Activated naive CD4-positive, alpha-beta T cell treated with anti-CD3 and anti-CD28 coated beads for 36 hours (primary cell): ENCODE measurements at regions of chr13 and their contacts with region 1.

Region 1: GRCh38 chr13:33017323-33017929 is 1.2 kb downstream of the KL start:
- DNase-seq: peak; percentile 79
- H3K4me3 Mint-ChIP-seq: peak overlapping the region; percentile 64
- H3K27ac Mint-ChIP-seq: peak overlapping the region; percentile 7
- H3K4me1 Mint-ChIP-seq: peaks cover 9% of the 10 kb centered on the region
- H3K27me3 Mint-ChIP-seq: peaks cover 59% of the 10 kb centered on the region

Region 2: GRCh38 chr13:32443111-32443510 is 574.3 kb before region 1 on chr13:
- CTCF ChIA-PET with region 1: no interaction called
- intact Hi-C with region 1: loop called (anchors 10 kb)
- DNase-seq: peak; percentile 61
- H3K4me3 Mint-ChIP-seq: no peak overlapping the region
- H3K27ac Mint-ChIP-seq: no peak overlapping the region
- H3K4me1 Mint-ChIP-seq: peaks cover 14% of the 10 kb centered on the region
- H3K27me3 Mint-ChIP-seq: no peaks in the 10 kb centered on the region

Region 3: GRCh38 chr13:32586080-32586900 is 431.1 kb before region 1 on chr13 and contains the start of gene PDS5B:
- CTCF ChIA-PET with region 1: interaction called, 3 read pairs
- intact Hi-C with region 1: loop called (anchors 1 kb)
- DNase-seq: peak; percentile 95
- H3K4me3 Mint-ChIP-seq: peak within 1 kb of the TSS; percentile 95
- H3K27ac Mint-ChIP-seq: peak within 1 kb of the TSS; percentile 91
- H3K4me1 Mint-ChIP-seq: peaks cover 36% of the 10 kb centered on the region
- H3K27me3 Mint-ChIP-seq: no peaks in the 10 kb centered on the region
- total RNA-seq, gene PDS5B: 48.0 to 51.6 TPM

Region 4: GRCh38 chr13:32669030-32669646 is 348.3 kb before region 1 on chr13:
- CTCF ChIA-PET with region 1: no interaction called
- intact Hi-C with region 1: loop called (anchors 5 kb)
- DNase-seq: peak; percentile 10
- H3K4me3 Mint-ChIP-seq: no peak overlapping the region
- H3K27ac Mint-ChIP-seq: no peak overlapping the region
- H3K4me1 Mint-ChIP-seq: peaks cover 6% of the 10 kb centered on the region
- H3K27me3 Mint-ChIP-seq: no peaks in the 10 kb centered on the region

Region 5: GRCh38 chr13:32791545-32792172 is 225.8 kb before region 1 on chr13:
- CTCF ChIA-PET with region 1: no interaction called
- intact Hi-C with region 1: loop called (anchors 2 kb)
- DNase-seq: peak; percentile 61
- H3K4me3 Mint-ChIP-seq: no peak overlapping the region
- H3K27ac Mint-ChIP-seq: peak overlapping the region; percentile 71
- H3K4me1 Mint-ChIP-seq: peaks cover 34% of the 10 kb centered on the region
- H3K27me3 Mint-ChIP-seq: no peaks in the 10 kb centered on the region

Region 6: GRCh38 chr13:32905063-32905863 is 112.2 kb before region 1 on chr13:
- CTCF ChIA-PET with region 1: no interaction called
- intact Hi-C with region 1: loop called (anchors 1 kb)
- DNase-seq: peak; percentile 54
- H3K4me3 Mint-ChIP-seq: peak overlapping the region; percentile 51
- H3K27ac Mint-ChIP-seq: peak overlapping the region; percentile 86
- H3K4me1 Mint-ChIP-seq: peaks cover 29% of the 10 kb centered on the region
- H3K27me3 Mint-ChIP-seq: no peaks in the 10 kb centered on the region

Region 7: GRCh38 chr13:32955881-32956594 is 61.4 kb before region 1 on chr13:
- CTCF ChIA-PET with region 1: no interaction called
- intact Hi-C with region 1: no loop called
- DNase-seq: no peak
- H3K4me3 Mint-ChIP-seq: no peak overlapping the region
- H3K27ac Mint-ChIP-seq: no peak overlapping the region
- H3K4me1 Mint-ChIP-seq: no peaks in the 10 kb centered on the region
- H3K27me3 Mint-ChIP-seq: peaks cover 2% of the 10 kb centered on the region

Region 8: GRCh38 chr13:33723772-33724435 is 706.5 kb after region 1 on chr13:
- CTCF ChIA-PET with region 1: no interaction called
- intact Hi-C with region 1: loop called (anchors 1 kb)
- DNase-seq: peak; percentile 82
- H3K4me3 Mint-ChIP-seq: no peak overlapping the region
- H3K27ac Mint-ChIP-seq: no peak overlapping the region
- H3K4me1 Mint-ChIP-seq: peaks cover 27% of the 10 kb centered on the region
- H3K27me3 Mint-ChIP-seq: no peaks in the 10 kb centered on the region